Ascending aorta (tissue), 2 donors: ENCODE measurements at regions of chr5 and their contacts with region 1.

Region 1: GRCh38 chr5:15260356-15261268 is 239.4 kb upstream of the FBXL7 start:
- DNase-seq: no peak
- H3K4me3 ChIP-seq: peak overlapping the region in 1 of 2 donors; percentile 30
- H3K27ac ChIP-seq: peak overlapping the region; percentile 32 to 64
- H3K4me1 ChIP-seq: peaks cover 0 to 26% of the 10 kb centered on the region in 2 donors
- H3K27me3 ChIP-seq: no peaks in the 10 kb centered on the region
- CTCF ChIP-seq: no peak

Region 2: DNA sequence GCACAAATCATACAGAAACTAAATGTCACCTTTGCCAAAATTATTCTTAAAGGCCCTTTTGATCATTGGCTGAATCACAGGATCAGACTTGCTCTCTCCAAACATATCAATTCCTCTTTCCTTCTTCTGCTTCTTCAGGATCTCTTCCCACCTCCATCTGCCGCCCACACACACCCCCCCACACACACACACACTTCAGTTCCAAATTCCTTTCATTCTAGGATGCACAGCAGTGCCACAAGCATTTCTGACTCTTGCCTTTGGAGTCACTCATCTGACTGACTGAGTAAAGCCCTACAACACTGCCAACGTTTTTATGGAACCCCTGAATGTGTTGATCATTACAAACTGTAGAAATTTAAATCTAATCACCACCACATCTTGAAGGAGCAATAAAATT is 1339.0 kb before region 1 on chr5:
- intact Hi-C with region 1: no loop called
- DNase-seq: no peak
- H3K4me3 ChIP-seq: no peak overlapping the region
- H3K27ac ChIP-seq: no peak overlapping the region
- H3K4me1 ChIP-seq: no peaks in the 10 kb centered on the region
- H3K27me3 ChIP-seq: no peaks in the 10 kb centered on the region
- CTCF ChIP-seq: no peak

Region 3: GRCh38 chr5:15320896-15321295 is 60.3 kb after region 1 on chr5:
- intact Hi-C with region 1: no loop called
- DNase-seq: no peak
- H3K4me3 ChIP-seq: no peak overlapping the region
- H3K27ac ChIP-seq: no peak overlapping the region
- H3K4me1 ChIP-seq: peaks cover 0 to 5% of the 10 kb centered on the region in 2 donors
- H3K27me3 ChIP-seq: no peaks in the 10 kb centered on the region
- CTCF ChIP-seq: no peak

Region 4: DNA sequence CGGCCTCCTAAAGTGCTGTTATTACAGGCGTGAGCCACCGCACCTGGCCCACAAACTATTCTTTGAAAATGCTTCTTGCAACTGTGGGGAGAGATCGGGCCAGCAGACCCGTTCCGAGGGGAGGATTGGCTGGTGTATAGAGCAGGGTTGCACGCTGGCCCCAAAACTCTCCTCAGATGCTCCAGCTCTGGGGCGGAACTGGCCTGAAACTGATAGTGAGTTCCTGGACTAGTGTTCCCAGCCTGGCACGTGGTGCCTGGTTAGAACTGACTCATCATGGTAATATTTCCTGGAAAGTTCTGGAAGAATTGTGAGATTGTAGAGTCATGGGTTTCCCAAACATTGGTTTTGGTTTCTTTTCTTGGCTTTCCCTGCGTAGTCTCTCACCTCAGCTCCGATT is 359.9 kb after region 1 on chr5:
- intact Hi-C with region 1: loop called (anchors 10 kb)
- DNase-seq: peak in 1 of 2 donors; percentile 86
- H3K4me3 ChIP-seq: peak overlapping the region; percentile 28 to 36
- H3K27ac ChIP-seq: peak overlapping the region; percentile 82 to 86
- H3K4me1 ChIP-seq: peaks cover 0 to 20% of the 10 kb centered on the region in 2 donors
- H3K27me3 ChIP-seq: no peaks in the 10 kb centered on the region
- CTCF ChIP-seq: no peak